CD4-positive, alpha-beta memory T cell (primary cell): ENCODE measurements at regions of chr3 and their contacts with region 1.

Region 1: DNA sequence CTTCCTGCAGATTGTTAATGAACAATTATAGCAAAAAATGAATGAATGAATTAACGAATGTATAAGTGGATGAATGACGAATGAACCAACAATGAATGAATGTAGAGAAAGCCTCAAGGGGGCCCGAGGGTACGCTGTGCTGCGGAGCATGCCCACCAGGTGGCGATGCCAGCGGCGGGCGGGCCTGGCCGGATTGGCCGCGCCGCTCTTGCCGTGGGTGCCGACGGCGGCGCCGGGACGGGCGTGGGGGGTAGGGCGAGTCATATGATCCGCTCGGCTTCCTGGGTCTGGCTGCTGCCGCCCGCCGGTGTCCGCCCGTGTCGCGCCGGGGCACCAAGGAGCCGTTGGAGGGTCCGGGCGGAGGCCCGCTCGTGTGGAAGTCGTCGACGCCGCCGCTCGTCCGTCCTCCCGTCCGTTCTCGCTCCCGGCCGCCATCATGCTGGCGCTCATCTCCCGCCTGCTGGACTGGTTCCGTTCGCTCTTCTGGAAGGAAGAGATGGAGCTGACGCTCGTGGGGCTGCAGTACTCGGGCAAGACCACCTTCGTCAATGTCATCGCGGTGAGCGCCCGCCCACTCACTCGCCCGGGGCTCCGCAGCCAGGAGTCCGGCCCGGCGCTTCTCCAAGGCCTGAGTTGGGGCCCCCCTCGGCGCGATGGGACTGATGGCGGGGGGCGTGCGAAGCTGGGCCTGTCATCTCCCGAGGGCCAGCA is at the start of gene ARL8B:
- DNase-seq: peak; percentile 87 to 90 (median 88)
- H3K4me3 ChIP-seq: peak within 1 kb of the TSS; percentile 64 to 93
- H3K4me3 Mint-ChIP-seq: peak within 1 kb of the TSS; percentile 84 to 97 (median 92)
- H3K27ac ChIP-seq: peak within 1 kb of the TSS; percentile 94
- H3K27ac Mint-ChIP-seq: peak within 1 kb of the TSS; percentile 92 to 97 (median 93)
- H3K4me1 ChIP-seq: peaks cover 50% of the 10 kb centered on the region
- H3K4me1 Mint-ChIP-seq: peaks cover 26 to 52% (median 39%) of the 10 kb centered on the region in 4 donors
- H3K27me3 ChIP-seq: no peaks in the 10 kb centered on the region
- H3K27me3 Mint-ChIP-seq: no peaks in the 10 kb centered on the region
- total RNA-seq, gene ARL8B: 55.5 to 60.5 TPM

Region 2: DNA sequence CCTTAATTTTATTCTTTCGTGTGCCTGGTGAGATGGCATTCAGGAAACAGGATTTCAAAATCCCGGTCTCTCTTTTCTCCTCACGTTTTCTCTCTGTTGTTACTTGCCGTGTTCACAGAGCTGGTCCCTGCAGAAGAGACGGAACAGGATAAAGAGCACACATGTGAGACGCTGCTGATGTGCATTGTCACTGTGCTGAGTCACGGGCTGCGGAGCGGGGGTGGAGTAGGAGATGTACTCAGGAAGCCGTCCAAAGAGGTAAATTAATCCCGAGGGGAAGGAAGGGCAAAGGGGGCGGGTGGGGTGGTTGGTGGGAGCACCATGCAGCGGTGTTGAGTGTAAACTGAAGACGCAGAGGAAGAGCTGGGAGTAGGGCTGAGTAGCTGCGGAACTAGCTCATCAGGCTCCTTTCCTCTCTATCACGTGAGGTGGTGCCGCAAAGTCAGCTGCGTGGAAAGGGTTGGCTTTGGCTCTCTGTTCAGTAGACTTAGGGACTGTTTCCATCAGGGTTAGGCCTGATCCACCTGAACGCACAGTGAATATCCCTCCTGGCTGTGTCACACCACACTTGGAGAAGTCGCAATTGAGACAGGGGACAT is 307.8 kb before region 1 on chr3:
- CTCF ChIA-PET with region 1: no interaction called
- POLR2A ChIA-PET with region 1: no interaction called
- intact Hi-C with region 1: no loop called
- DNase-seq: no peak
- H3K4me3 ChIP-seq: no peak overlapping the region
- H3K4me3 Mint-ChIP-seq: no peak overlapping the region
- H3K27ac ChIP-seq: no peak overlapping the region
- H3K27ac Mint-ChIP-seq: peak overlapping the region in 2 of 7 donors; percentile 14 to 44
- H3K4me1 ChIP-seq: no peaks in the 10 kb centered on the region
- H3K4me1 Mint-ChIP-seq: peaks cover 0 to 3% (median 1%) of the 10 kb centered on the region in 4 donors
- H3K27me3 ChIP-seq: no peaks in the 10 kb centered on the region
- H3K27me3 Mint-ChIP-seq: no peaks in the 10 kb centered on the region

Region 3: GRCh38 chr3:5187156-5187919 is 65.2 kb after region 1 on chr3 and contains the start of gene EDEM1:
- CTCF ChIA-PET with region 1: interaction called, 12 read pairs
- POLR2A ChIA-PET with region 1: interaction called, 43 read pairs
- intact Hi-C with region 1: loop called (anchors 1 kb)
- DNase-seq: peak; percentile 92 to 94 (median 93)
- H3K4me3 ChIP-seq: peak within 1 kb of the TSS; percentile 80 to 85
- H3K4me3 Mint-ChIP-seq: peak within 1 kb of the TSS; percentile 93 to 100 (median 98)
- H3K27ac ChIP-seq: peak within 1 kb of the TSS; percentile 87
- H3K27ac Mint-ChIP-seq: peak within 1 kb of the TSS; percentile 98 to 99 (median 99)
- H3K4me1 ChIP-seq: peaks cover 16% of the 10 kb centered on the region
- H3K4me1 Mint-ChIP-seq: peaks cover 26 to 46% (median 32%) of the 10 kb centered on the region in 4 donors
- H3K27me3 ChIP-seq: no peaks in the 10 kb centered on the region
- H3K27me3 Mint-ChIP-seq: no peaks in the 10 kb centered on the region
- total RNA-seq, gene EDEM1: 146 to 153 TPM